ENCODE measurements at regions of chrX and their contacts with region 1.

Region 1: GRCh38 chrX:104469771-104470170 is 96.2 kb upstream of the IL1RAPL2 start:
- DNase-seq: no peak
- ATAC-seq: no peak
- H3K4me3 ChIP-seq: no peak overlapping the region
- H3K27ac ChIP-seq: no peak overlapping the region
- H3K4me1 ChIP-seq: no peaks in the 10 kb centered on the region
- H3K27me3 ChIP-seq: peaks cover 0 to 7% (median 0%) of the 10 kb centered on the region in 3 donors
- CTCF ChIP-seq: no peak

Region 2: DNA sequence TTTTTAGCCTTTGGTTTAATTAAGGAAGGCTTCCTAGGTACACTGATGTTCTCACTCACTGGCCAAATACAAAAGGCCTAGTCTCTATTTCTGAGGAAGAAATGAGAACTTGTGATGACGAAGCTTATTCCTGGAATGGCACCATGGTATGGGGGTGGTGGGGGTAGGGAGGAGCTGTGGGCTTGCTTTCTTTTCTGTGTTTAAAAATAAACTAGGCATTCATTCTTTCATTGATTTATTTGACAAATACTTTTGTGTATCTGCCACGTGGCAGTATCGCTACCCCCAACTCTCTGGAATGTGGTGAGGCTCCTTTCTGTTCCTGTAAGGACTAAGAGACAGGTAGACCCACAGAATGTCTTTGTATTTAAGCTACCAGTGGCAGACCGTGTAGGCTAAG is 43.4 kb before region 1 on chrX:
- intact Hi-C with region 1: loop called in 1 of 2 experiments (anchors 2 kb)
- DNase-seq: no peak
- ATAC-seq: no peak
- H3K4me3 ChIP-seq: no peak overlapping the region
- H3K27ac ChIP-seq: no peak overlapping the region
- H3K4me1 ChIP-seq: no peaks in the 10 kb centered on the region
- H3K27me3 ChIP-seq: peaks cover 0 to 5% (median 0%) of the 10 kb centered on the region in 3 donors
- CTCF ChIP-seq: no peak

Region 3: GRCh38 chrX:104510825-104511224 is 41.1 kb after region 1 on chrX:
- intact Hi-C with region 1: no loop called
- DNase-seq: no peak
- ATAC-seq: no peak
- H3K4me3 ChIP-seq: no peak overlapping the region
- H3K27ac ChIP-seq: no peak overlapping the region
- H3K4me1 ChIP-seq: no peaks in the 10 kb centered on the region
- H3K27me3 ChIP-seq: peaks cover 0 to 4% (median 0%) of the 10 kb centered on the region in 3 donors
- CTCF ChIP-seq: no peak